ENCODE measurements at regions of chr11 and their contacts with region 1.

Region 1: DNA sequence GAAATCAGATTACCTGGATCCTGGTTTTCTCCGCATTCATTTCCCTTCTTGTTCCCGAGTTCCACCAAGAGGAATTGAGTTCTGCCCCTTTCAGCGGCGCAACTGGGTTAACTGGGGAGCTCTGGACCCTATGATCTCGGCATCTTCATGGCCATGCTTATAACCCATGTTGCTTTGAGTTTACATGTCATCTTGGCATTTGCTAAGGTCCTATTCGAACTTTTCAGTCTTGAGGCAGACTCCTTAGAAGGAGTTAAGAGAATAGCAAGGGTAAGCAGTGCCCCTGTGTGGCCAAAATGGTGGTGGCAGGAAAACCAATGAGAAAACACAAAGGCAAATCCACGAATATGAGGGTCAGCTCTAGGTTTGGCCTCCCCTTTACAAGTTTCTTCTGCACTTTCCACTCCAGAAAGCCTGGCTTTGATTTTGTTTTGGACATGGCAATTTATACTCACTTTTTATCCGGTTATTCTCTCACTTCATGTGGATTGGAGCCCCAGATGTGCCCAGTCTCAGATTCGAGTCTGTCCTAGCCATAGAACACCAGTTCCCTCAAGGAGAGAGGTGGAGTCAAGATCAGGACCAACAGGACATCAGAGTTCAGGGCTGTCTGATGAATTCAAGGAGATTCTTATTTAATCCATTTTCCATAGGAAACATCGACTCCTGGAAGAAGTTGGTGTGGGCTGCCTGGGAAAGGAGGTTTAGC is 55.3 kb upstream of the FBXO3 start:
- DNase-seq: peak; percentile 79
- ATAC-seq: peak; percentile 83
- H3K4me3 Mint-ChIP-seq: peak overlapping the region; percentile 55
- H3K27ac Mint-ChIP-seq: no peak overlapping the region
- H3K4me1 Mint-ChIP-seq: peaks cover 3% of the 10 kb centered on the region
- H3K27me3 Mint-ChIP-seq: peaks cover 42% of the 10 kb centered on the region

Region 2: DNA sequence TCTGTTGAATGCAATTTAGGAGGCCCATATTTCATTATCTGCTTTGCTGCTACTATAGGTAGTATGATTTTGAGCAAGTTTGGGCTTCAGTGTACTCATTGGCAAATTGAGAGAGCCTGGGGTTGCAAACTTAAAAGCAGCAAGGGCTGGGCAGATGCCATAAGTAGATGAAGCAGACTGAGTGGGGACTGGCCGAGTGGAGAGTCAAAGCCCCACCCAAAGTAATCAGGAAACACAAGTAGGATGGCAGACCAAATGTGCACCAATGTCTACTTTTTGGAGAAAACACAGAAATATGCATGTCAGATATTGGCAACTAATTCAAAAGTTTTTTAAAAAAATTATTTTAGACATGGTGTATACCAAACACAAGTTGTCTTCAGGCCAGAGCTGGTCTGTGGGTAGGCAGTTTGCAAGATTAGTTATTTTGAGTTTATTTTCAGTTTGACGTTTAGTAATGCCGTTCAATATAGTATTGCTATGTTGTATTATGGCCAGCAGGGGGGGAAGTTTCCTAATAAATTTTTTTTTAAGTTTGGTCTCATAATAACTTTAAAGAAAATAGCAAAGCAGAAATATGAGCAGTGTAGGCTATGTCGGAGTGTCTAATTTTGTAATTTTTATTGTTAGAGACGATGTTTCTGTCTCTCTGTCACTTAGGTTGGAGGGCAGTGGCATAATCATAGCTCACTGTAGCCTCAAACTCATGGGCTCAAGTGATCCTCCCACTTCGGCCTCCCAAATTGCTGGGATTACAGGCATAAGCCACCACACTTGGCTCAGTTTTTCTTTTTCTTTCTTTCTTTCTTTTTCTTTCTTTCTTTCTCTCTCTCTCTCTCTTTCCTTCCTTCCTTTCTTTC is 467.3 kb before region 1 on chr11:
- CTCF ChIA-PET with region 1: interaction called, 3 read pairs
- POLR2A ChIA-PET with region 1: no interaction called
- intact Hi-C with region 1: loop called (anchors 1 kb)
- DNase-seq: no peak
- ATAC-seq: peak; percentile 47
- H3K4me3 Mint-ChIP-seq: no peak overlapping the region
- H3K27ac Mint-ChIP-seq: no peak overlapping the region
- H3K4me1 Mint-ChIP-seq: no peaks in the 10 kb centered on the region
- H3K27me3 Mint-ChIP-seq: peaks cover 8% of the 10 kb centered on the region

Region 3: DNA sequence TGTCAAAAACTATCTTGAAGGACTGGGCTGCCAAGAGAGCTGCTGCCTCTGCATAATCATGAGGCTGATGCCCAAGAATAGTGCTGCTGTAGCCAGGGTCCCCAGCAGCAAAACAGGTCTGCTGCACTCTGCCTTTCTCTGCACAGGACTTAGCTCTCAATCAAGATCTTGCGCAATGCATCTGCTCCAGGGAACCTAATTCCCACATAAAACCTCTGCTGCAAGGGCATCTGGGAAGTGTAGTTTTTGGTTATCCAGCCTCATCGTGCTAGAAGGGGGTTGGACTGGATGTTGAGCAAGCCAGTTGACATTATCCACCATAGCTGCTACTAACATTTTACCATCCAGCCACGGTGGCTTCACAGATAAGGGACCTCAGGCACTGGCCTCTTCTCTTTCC is 321.6 kb before region 1 on chr11:
- CTCF ChIA-PET with region 1: no interaction called
- POLR2A ChIA-PET with region 1: no interaction called
- intact Hi-C with region 1: no loop called
- DNase-seq: no peak
- ATAC-seq: no peak
- H3K4me3 Mint-ChIP-seq: no peak overlapping the region
- H3K27ac Mint-ChIP-seq: no peak overlapping the region
- H3K4me1 Mint-ChIP-seq: no peaks in the 10 kb centered on the region
- H3K27me3 Mint-ChIP-seq: peaks cover 10% of the 10 kb centered on the region

Region 4: DNA sequence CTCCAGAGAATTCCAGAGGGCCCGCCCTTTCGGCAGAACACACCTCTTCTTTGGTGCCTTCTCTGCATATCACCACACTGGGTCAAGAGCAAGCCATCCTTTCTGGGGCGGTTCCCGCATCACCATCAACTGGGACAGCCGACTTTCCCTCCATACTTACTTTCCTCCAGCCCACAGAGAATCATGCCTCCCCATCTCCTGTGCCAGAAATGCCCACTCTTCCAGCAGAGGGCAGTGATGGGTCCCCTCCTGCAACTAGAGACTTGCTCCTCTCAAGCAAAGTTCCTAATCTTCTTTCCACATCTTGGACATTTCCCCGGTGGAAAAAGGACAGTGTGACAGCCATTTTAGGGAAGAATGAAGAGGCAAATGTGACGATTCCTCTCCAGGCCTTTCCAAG is 286.7 kb before region 1 on chr11:
- CTCF ChIA-PET with region 1: no interaction called
- POLR2A ChIA-PET with region 1: no interaction called
- intact Hi-C with region 1: loop called in 1 of 2 experiments (anchors 1 kb)
- DNase-seq: peak; percentile 60
- ATAC-seq: no peak
- H3K4me3 Mint-ChIP-seq: no peak overlapping the region
- H3K27ac Mint-ChIP-seq: no peak overlapping the region
- H3K4me1 Mint-ChIP-seq: no peaks in the 10 kb centered on the region
- H3K27me3 Mint-ChIP-seq: peaks cover 27% of the 10 kb centered on the region

Region 5: DNA sequence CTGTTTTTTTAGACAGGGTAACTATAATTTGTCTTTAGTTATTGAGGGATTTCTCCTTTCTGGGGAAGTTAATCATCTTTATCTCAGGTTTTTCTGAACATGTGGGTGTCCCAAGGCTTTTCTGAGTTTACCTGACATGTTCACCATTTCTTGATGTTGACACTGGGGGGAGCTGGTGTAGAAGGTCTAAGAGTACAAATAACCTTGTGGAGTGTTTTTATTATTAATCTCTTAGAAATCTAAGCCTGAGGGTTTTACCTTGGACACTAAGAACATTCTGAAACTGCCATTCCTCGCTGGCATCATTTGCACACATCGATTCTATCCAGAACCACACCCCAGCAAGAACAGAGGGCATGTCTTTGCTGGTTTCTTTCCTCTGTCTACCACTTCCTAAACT is 113.4 kb before region 1 on chr11:
- CTCF ChIA-PET with region 1: interaction called, 9 read pairs
- POLR2A ChIA-PET with region 1: no interaction called
- intact Hi-C with region 1: loop called in 1 of 2 experiments (anchors 1 kb)
- DNase-seq: no peak
- ATAC-seq: peak; percentile 75
- H3K4me3 Mint-ChIP-seq: no peak overlapping the region
- H3K27ac Mint-ChIP-seq: no peak overlapping the region
- H3K4me1 Mint-ChIP-seq: peaks cover under 1% of the 10 kb centered on the region
- H3K27me3 Mint-ChIP-seq: no peaks in the 10 kb centered on the region

Region 6: DNA sequence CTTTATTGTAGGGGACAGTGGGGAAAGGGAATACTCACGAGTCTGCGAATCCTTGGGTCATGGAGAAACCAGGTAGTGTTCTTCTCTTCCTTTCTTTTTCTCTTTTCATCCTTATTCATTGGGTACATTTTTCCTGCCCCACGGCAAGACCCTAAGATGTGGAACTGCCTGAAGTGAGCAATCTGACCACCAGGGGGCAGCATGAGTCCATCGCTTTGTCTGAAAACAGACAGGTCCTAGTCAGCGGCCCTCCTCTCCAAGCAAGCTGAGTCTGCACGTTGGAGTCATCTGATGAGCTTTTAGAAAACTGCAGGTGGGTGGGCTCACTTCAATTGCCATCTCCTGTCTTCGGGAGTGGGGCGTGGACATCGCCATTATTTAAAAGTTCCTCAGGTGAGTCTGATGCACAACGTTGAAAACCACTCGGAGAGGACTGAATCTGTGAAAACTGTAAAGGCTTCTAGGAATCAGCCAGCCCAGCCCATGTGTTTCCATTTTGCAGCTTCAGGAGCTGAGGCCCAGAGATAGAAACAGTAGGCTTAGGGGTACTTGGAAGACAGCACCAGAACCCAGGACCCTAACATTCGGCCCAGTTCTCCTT is 21.3 kb before region 1 on chr11:
- CTCF ChIA-PET with region 1: interaction called, 81 read pairs
- POLR2A ChIA-PET with region 1: no interaction called
- intact Hi-C with region 1: loop called (anchors 1 kb)
- DNase-seq: peak; percentile 91
- ATAC-seq: peak; percentile 90
- H3K4me3 Mint-ChIP-seq: no peak overlapping the region
- H3K27ac Mint-ChIP-seq: no peak overlapping the region
- H3K4me1 Mint-ChIP-seq: no peaks in the 10 kb centered on the region
- H3K27me3 Mint-ChIP-seq: peaks cover 6% of the 10 kb centered on the region

Measured in activated CD4-positive, alpha-beta T cell treated with anti-CD3 and anti-CD28 coated beads for 36 hours (primary cell).